Stomach (tissue), 19 donors: ENCODE measurements at regions of chr10 and their contacts with region 1.

Region 1: DNA sequence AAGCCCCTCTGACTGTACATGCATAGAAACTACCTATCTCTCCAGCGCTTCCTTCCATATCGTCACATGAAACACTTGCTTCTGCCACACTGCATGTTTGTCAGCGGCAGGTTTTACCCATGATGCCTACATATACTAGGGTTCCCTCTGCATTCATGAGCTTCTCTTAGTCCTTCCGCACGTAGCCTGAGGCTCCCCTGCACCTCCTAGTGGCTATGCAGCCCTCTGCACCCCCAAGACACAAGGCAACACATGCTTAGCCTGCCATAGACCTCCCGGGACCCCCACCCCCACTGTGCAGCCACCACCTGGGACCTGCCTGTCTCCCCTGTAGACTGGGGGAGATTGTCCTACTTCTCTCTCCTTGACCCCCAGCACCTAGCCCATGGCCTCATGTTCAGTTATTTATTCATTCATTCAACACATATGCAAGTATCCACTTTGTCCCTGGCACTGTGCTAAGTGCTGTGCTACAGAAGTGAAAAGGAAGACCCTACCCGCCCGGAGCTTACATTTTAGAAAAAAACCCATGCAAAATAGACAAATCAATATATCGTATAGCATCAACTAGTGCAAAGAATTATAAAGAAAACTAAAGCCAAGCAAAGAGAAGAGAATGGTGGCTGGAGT is 23.5 kb downstream of the TMEM273 start:
- DNase-seq: peak in 1 of 2 donors; percentile 78
- H3K4me3 ChIP-seq: no peak overlapping the region
- H3K27ac ChIP-seq: no peak overlapping the region
- H3K4me1 ChIP-seq: no peaks in the 10 kb centered on the region
- H3K27me3 ChIP-seq: peaks cover 0 to 4% (median 0%) of the 10 kb centered on the region in 3 donors
- CTCF ChIP-seq: peak in 5 of 7 experiments; percentile 32 to 53 (median 42)
- EP300 ChIP-seq: no peak
- POLR2A ChIP-seq: no peak

Region 2: DNA sequence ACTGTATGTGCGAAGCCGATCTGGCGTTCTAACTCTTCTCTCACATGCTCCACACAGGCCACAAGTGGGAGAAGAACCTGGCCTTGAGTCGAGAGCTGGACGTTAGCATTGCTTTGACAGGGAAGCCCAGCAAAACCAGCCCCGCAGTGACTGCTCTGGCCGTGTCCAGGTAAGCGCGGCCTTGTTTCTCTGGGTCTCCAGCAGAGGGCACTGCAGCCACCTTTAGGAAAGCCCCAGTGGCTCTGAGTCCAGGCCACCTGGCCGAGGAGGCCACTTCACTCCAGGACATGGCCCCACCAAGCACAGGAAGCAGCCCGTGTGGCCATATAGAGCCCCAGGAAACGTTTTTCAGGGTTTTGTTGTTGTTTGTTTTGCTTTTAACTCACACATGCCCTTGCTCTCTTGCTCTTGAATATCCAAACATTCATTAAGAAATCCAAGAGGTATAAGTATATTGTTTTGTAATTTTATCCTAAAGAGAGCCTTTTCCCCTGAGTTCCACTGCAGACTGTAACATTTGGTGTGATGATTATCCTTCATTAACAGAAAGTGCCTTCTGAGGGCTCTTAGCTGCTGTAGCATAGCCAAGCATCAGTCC is 183.3 kb before region 1 on chr10:
- intact Hi-C with region 1: loop called (anchors 10 kb)
- DNase-seq: peak; percentile 41 to 71
- H3K4me3 ChIP-seq: no peak overlapping the region
- H3K27ac ChIP-seq: no peak overlapping the region
- H3K4me1 ChIP-seq: peaks cover 0 to 4% (median 0%) of the 10 kb centered on the region in 4 donors
- H3K27me3 ChIP-seq: no peaks in the 10 kb centered on the region
- CTCF ChIP-seq: peak in 5 of 7 experiments; percentile 40 to 73 (median 68)
- EP300 ChIP-seq: no peak
- POLR2A ChIP-seq: no peak

Region 3: GRCh38 chr10:49115015-49115795 is 49.5 kb before region 1 on chr10 and contains the start of gene VSTM4:
- intact Hi-C with region 1: no loop called
- DNase-seq: peak in 1 of 2 donors; percentile 78
- H3K4me3 ChIP-seq: peak within 1 kb of the TSS; percentile 49 to 61 (median 54)
- H3K27ac ChIP-seq: peak within 1 kb of the TSS; percentile 52 to 88 (median 71)
- H3K4me1 ChIP-seq: peaks cover 0 to 48% (median 20%) of the 10 kb centered on the region in 4 donors
- H3K27me3 ChIP-seq: peaks cover 0 to 31% (median 4%) of the 10 kb centered on the region in 3 donors
- CTCF ChIP-seq: no peak
- EP300 ChIP-seq: no peak
- POLR2A ChIP-seq: no peak
- total RNA-seq, gene VSTM4: 0.58 to 23.1 (median 3.8) TPM

Region 4: GRCh38 chr10:49222170-49222569 is 57.5 kb after region 1 on chr10:
- intact Hi-C with region 1: no loop called
- DNase-seq: no peak
- H3K4me3 ChIP-seq: no peak overlapping the region
- H3K27ac ChIP-seq: no peak overlapping the region
- H3K4me1 ChIP-seq: no peaks in the 10 kb centered on the region
- H3K27me3 ChIP-seq: no peaks in the 10 kb centered on the region
- CTCF ChIP-seq: no peak
- EP300 ChIP-seq: no peak
- POLR2A ChIP-seq: no peak